Dendritic cell treated with granulocyte-macrophage colony-stimulating factor and Interleukin-4, amounts not matched to agents 40 ng/mL and 50 ng/mL, for 4 days (primary cell): ENCODE measurements at regions of chr12 and their contacts with region 1.

Region 1: DNA sequence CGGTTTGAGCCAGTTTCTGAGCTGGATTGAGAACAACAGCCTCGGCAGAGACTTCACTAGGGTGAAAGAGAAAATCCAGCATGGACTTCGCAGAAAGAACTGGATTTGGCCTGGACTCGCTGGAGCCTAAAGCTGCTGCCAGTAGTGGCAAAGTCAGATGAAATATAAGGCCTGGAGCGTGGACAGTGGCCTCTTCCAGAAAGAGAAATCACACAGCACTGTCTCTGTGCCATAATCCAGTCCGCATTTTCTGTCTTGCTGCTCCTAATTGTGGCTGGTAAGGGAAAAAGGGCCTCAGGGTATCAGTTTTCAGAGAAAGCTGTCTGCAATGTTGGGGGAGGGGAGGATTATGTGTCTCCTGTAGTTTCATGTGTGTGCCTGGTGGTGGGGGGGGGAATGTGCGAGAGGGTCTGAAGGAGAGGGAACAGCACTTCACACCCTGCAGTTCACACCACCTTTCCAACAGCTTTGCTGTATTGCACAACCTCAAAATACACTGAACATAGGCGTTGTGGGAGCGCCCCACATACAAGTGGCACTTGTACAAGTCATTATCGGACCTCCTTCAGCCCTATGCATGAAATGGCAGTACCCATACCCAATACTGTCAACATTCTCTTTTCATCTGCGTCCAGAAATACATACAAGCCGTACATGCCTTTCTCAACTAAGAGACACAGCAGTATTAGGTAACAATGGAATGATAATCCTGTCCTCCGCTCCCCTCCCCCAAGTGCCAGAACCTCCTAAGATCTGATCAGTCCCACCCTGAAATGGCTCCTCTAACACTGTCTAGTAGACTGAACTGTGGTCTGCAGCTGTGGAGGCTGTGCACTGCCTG is 107.5 kb upstream of the ATF7IP start:
- H3K4me3 Mint-ChIP-seq: peak overlapping the region; percentile 30
- H3K27ac Mint-ChIP-seq: peak overlapping the region; percentile 96
- H3K4me1 Mint-ChIP-seq: peaks cover 73% of the 10 kb centered on the region
- H3K27me3 Mint-ChIP-seq: no peaks in the 10 kb centered on the region

Region 2: GRCh38 chr12:14272956-14273907 is 15.3 kb after region 1 on chr12:
- intact Hi-C with region 1: loop called (anchors 2 kb)
- H3K4me3 Mint-ChIP-seq: no peak overlapping the region
- H3K27ac Mint-ChIP-seq: peak overlapping the region; percentile 94
- H3K4me1 Mint-ChIP-seq: peaks cover 40% of the 10 kb centered on the region
- H3K27me3 Mint-ChIP-seq: no peaks in the 10 kb centered on the region

Region 3: GRCh38 chr12:14314801-14315200 is 56.8 kb after region 1 on chr12:
- intact Hi-C with region 1: loop called (anchors 5 kb)
- H3K4me3 Mint-ChIP-seq: no peak overlapping the region
- H3K27ac Mint-ChIP-seq: peak overlapping the region; percentile 91
- H3K4me1 Mint-ChIP-seq: peaks cover 21% of the 10 kb centered on the region
- H3K27me3 Mint-ChIP-seq: no peaks in the 10 kb centered on the region

Region 4: GRCh38 chr12:14365294-14366208 is 107.6 kb after region 1 on chr12 and contains the start of gene ATF7IP:
- intact Hi-C with region 1: loop called (anchors 1 kb)
- H3K4me3 Mint-ChIP-seq: peak within 1 kb of the TSS; percentile 74
- H3K27ac Mint-ChIP-seq: peak within 1 kb of the TSS; percentile 84
- H3K4me1 Mint-ChIP-seq: peaks cover 6% of the 10 kb centered on the region
- H3K27me3 Mint-ChIP-seq: no peaks in the 10 kb centered on the region